Mammary epithelial cell (primary cell): ENCODE measurements at regions of chrX and their contacts with region 1.

Region 1: GRCh38 chrX:49165901-49166881 is 3.6 kb downstream of the MAGIX start:
- DNase-seq: peak; percentile 88
- H3K4me3 ChIP-seq: peak overlapping the region; percentile 18 to 50 (median 48)
- H3K27ac ChIP-seq: peak overlapping the region; percentile 81
- H3K4me1 ChIP-seq: peaks cover 7% of the 10 kb centered on the region
- H3K27me3 ChIP-seq: no peaks in the 10 kb centered on the region
- CTCF ChIP-seq: peak in 1 of 2 donors; percentile 47

Region 2: DNA sequence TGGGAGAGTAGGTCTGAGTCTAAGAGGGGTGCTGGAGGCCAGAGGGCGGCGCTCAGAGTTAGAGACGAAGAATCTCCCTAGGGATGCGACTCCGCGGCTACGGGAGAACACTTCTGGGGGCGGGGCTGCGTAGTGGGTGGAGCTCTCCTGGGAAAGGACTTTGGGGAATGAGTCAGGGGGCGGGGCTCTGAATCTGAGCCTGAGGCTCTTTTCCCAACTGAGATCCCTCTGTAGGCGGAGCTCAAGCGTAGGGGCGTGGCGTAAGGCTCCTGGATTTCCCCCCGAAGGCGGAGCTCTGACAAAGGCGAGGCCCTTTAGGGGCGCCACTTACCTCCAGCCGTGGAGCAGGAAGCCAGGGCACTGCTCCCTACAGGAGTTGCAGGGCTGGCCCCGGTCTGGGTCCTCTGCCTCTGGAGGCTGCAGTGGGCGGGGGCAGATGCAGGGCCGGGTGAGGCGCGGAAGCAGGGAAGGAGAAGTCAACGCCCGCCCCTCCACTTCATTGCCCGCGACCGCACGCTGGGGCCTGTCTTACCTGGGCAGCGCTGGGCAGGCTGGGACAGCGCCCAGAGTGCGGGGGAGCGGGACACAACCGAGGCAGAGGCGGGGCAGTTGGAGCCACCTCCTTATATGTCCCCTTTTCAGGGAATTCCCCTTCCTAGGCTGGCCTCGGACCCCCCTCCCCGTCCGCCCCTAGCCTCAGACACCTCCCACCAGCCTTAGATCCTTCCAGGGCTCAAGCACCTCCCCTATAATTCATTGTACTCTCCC is 18.3 kb after region 1 on chrX:
- CTCF ChIA-PET with region 1: no interaction called
- dilution Hi-C with region 1: no loop called
- in situ Hi-C with region 1: no loop called
- intact Hi-C with region 1: loop called (anchors 2 kb)
- DNase-seq: peak; percentile 92
- H3K4me3 ChIP-seq: peak overlapping the region; percentile 41 to 74 (median 65)
- H3K27ac ChIP-seq: peak overlapping the region; percentile 56
- H3K4me1 ChIP-seq: peaks cover 11% of the 10 kb centered on the region
- H3K27me3 ChIP-seq: no peaks in the 10 kb centered on the region
- CTCF ChIP-seq: no peak

Region 3: DNA sequence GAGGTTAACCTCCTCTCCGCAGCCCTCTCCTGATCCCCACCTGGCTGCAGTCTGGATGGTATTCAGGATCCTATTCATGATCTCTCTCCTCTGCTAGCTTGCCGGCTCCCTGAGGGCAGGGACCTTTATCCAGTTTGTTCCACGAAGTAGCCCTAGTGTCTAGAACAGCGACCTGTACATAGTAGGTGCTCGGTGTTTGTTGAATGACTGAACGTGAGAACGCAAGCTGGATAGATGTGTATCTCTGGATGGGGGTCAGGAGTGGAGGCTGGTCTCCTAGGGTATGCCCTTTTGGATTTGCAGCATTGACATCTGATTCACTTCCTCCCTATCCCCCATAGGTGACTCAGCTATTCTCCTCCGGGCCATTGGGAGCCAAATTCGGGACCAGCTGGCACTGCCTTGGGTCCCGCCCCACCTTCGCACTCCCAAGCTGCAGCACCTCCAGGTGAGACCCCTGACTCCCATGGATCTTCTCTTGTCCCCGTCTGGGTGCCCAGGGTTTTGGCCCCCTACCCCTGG is 76.4 kb after region 1 on chrX:
- CTCF ChIA-PET with region 1: no interaction called
- dilution Hi-C with region 1: no loop called
- in situ Hi-C with region 1: no loop called
- intact Hi-C with region 1: no loop called
- DNase-seq: no peak
- H3K4me3 ChIP-seq: no peak overlapping the region
- H3K27ac ChIP-seq: no peak overlapping the region
- H3K4me1 ChIP-seq: peaks cover 6% of the 10 kb centered on the region
- H3K27me3 ChIP-seq: no peaks in the 10 kb centered on the region
- CTCF ChIP-seq: no peak